Left cardiac atrium (tissue), 4 donors: ENCODE measurements at regions of chr1 and their contacts with region 1.

Region 1: GRCh38 chr1:10378081-10378841 is 20.6 kb upstream of the PGD start:
- DNase-seq: peak; percentile 48
- ATAC-seq: peak; percentile 55 to 60

Region 2: GRCh38 chr1:10430216-10431069 is 52.2 kb after region 1 on chr1 and contains the start of gene CENPS:
- intact Hi-C with region 1: loop called (anchors 2 to 5 kb)
- DNase-seq: peak; percentile 96
- ATAC-seq: peak; percentile 98
- total RNA-seq, gene CENPS: 4.1 to 5.0 TPM